Right ventricle myocardium inferior (tissue), 1 donor: ENCODE measurements at regions of chr3 and their contacts with region 1.

Region 1: DNA sequence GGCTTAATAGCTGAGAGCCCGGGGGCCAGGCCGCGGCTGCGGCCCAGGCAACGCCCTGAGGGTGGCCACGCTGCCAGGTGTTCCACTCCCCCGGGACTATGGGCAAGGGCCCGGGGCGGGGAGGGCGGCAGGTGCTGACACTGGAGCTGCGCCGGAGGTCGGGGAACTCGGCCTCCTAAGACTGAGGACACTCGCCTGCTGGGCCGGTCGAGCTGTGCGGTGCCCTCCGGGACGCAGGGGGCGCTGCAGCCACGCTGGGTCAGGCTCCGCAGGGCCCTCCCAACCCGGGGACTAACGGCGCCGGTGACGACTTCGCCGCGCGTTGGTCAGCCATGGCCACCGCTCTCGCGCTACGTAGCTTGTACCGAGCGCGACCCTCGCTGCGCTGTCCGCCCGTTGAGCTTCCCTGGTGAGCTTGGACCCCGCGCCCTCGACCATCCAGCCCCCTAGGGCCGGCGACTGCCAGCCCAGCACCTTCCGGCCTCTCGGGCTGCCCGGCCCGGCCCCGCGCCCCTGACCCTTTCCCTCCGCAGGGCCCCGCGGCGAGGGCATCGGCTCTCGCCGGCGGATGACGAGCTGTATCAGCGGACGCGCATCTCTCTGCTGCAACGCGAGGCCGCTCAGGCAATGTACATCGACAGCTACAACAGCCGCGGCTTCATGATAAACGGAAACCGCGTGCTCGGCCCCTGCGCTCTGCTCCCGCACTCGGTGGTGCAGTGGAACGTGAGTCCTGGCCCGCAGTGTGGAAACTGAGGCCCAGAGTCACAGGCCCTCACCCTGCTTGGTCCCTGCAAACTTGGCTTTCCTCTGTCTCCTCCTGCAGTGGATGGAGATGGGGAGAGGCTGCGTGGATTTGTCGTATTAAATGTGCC is at the start of gene NDUFAF3:
- DNase-seq: peak; percentile 96
- ATAC-seq: peak; percentile 90
- total RNA-seq, gene NDUFAF3: 157 TPM

Region 2: GRCh38 chr3:48960841-48961413 is 61.1 kb before region 1 on chr3:
- intact Hi-C with region 1: no loop called
- DNase-seq: no peak
- ATAC-seq: no peak

Region 3: DNA sequence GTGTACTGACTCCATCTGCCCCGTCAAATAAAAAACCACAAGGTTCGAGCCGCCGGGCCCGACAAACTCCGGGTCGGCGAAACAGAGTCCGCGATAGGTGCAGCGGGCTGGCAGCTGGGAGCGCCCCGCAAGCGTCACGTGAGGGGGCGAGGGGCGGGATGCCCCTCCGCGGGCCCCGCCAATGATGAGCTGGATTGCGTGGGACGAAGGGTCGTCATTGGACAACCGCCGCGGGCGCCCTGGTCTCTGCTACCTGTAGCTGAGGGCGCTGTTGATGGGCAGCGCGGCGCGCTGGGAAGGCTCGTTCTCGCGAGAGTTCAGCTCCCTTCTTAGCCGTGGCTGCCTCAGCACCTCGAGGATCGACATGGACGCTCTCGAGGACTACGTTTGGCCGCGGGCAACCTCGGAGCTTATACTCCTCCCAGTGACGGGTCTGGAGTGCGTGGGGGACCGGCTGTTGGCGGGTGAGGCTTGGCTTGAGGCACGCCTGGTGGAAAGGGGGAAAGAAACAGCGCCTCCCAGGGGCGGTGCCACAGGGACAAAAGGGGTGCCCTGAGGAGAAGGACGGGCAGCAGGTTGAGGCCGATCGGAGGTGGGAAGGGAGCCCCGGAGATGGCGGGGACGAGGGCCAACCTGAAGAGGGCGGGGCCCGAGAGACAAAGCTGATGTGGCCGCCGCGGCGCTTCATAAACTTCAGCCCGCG is 14.8 kb before region 1 on chr3 and contains the start of gene WDR6:
- intact Hi-C with region 1: loop called (anchors 1 kb)
- DNase-seq: peak; percentile 98
- ATAC-seq: peak; percentile 90
- total RNA-seq, gene WDR6: 83.3 TPM

Region 4: GRCh38 chr3:49076646-49077045 is 54.6 kb after region 1 on chr3:
- intact Hi-C with region 1: no loop called
- DNase-seq: no peak
- ATAC-seq: no peak

Region 5: DNA sequence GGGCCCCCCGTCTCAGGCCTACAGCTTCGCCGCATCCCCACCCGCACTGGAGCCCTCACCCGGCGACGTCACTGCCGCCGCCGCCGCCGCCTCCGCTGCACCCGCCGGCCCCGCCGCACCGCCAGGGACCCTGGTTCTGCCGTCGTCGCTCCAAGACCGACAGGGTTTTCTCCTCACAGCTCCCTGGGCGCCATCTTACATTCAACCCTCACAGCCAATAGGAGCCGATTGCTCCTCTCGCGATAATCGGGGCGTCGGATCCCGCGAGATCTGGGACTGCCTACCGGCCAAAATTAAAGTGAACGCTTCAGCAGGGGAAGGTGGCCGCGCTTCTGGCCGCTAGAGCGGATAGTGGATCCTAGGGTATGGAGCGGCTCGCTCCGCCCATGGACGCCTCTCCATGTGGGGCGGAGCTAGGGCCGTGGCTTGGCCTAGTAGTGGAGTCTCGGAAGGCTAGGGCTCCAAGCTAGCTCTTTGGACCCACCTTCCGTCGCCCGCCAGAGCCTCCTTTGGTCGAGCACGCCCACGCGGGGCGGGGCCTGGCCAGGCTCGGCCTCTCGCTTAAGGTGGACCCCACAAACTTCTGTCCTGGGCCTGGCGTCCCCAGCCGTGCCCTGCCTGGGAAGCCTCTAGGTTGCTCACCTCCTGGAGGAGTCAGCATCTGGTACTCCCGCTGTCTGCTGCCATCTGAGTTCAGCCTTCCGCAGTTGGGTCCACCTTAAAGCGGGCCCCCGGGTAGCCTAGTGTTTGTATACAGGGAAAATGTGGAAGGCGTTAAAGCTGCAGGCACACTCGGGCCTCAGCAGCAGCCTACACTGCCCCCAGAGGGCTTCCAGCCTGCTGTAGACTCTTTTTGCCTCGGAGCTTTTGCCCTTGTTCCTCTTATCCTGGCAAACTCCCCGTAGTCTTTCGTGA is 72.1 kb after region 1 on chr3 and contains the start of gene QRICH1:
- intact Hi-C with region 1: loop called (anchors 5 kb)
- DNase-seq: peak; percentile 98
- ATAC-seq: peak; percentile 94
- total RNA-seq, gene QRICH1: 52.9 TPM

Region 6: DNA sequence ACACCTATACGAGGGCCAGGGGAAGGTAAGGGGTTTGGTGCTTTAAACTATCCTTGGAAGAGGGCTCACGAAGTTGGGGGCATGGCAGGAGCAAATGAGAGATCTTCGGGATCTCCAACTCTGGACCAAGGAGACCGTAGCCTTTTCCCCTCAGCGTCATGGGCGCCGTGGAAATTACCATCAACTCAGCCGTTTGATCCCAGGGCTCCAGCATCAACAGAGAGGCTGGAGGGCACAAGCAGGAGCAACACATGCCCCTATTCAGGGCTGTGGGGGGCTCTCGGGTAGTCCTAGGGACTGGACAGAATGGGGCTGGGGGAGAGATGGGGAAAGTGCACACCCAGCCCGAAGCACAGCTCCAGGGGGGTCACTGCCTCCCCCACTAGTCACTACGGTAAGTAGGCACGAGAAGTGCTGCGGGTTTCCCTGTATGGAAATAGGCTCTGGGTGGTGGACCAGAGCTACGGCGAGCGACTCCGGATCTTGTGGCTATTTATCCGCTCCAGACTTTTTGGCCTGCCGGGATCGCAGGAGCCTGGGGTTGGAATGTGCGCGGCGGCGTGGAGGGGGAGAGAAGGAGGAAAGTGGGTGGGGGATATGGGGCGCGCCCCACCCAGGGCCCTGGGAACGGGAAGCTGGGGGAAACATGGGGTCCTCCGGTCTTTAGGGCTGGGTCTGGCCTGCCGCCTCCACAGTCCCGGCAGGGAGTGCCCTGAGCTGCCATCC is 111.3 kb after region 1 on chr3:
- intact Hi-C with region 1: loop called (anchors 5 kb)
- DNase-seq: peak; percentile 91
- ATAC-seq: peak; percentile 89

Region 7: GRCh38 chr3:49422379-49423248 is 400.6 kb after region 1 on chr3 and contains the start of gene AMT:
- intact Hi-C with region 1: loop called (anchors 10 kb)
- DNase-seq: peak; percentile 81
- ATAC-seq: peak; percentile 66
- total RNA-seq, gene AMT: 20.5 TPM